WTC11 (cell line): ENCODE measurements at regions of chr9 and their contacts with region 1.

Region 1: DNA sequence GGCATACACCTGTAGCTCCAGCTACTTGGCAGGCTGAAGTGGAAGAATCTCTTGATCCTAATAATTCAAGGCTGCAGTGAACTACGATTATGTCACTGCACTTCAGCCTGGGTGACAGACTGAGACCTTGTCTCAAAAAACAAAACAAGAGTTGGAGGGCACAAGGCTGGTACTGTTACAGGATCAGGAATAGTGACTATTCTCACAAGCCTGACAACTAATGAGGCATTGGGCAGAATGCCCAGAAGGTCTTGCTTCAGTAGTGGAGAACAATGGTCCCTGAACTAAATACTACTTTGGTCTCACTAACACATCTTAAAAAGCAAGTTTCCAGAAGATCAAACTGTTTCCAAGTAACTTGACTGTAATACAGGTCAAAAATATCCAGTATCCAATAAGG is 182.9 kb upstream of the RFX3 start:
- DNase-seq: no peak
- ATAC-seq: no peak
- H3K4me3 Mint-ChIP-seq: no peak overlapping the region
- H3K27ac Mint-ChIP-seq: no peak overlapping the region
- H3K4me1 Mint-ChIP-seq: no peaks in the 10 kb centered on the region
- H3K27me3 Mint-ChIP-seq: no peaks in the 10 kb centered on the region; the same call in 1 of the 2 replicates
- CTCF ChIP-seq: no peak

Region 2: DNA sequence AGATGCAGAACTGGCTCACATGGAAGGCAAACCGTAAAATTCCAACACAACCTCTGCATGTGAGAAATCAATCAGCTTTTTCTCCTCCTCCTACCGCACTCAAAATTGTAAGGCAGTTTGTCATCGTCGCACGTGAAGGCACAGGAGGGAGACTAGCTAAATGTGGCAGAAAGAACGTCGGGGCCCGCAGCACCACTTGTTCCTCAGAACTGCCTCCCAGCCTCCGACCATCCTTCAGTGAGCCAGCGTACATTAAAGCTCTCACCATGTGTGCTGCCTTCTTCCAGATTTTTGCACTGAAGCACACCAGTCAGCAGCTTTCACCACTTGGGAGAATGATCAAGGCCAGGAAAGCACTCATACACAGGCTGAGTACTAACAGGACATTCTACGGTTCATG is 288.9 kb before region 1 on chr9:
- CTCF ChIA-PET with region 1: no interaction called
- POLR2A ChIA-PET with region 1: interaction called, 10 read pairs
- DNase-seq: no peak
- ATAC-seq: no peak
- H3K4me3 Mint-ChIP-seq: no peak overlapping the region
- H3K27ac Mint-ChIP-seq: no peak overlapping the region
- H3K4me1 Mint-ChIP-seq: no peaks in the 10 kb centered on the region
- H3K27me3 Mint-ChIP-seq: no peaks in the 10 kb centered on the region
- CTCF ChIP-seq: no peak

Region 3: GRCh38 chr9:3508521-3509291 is 200.0 kb before region 1 on chr9:
- CTCF ChIA-PET with region 1: no interaction called
- POLR2A ChIA-PET with region 1: no interaction called
- DNase-seq: no peak
- ATAC-seq: no peak
- H3K4me3 Mint-ChIP-seq: no peak overlapping the region
- H3K27ac Mint-ChIP-seq: peak overlapping the region; percentile 25
- H3K4me1 Mint-ChIP-seq: peaks cover 53% of the 10 kb centered on the region
- H3K27me3 Mint-ChIP-seq: no peaks in the 10 kb centered on the region
- CTCF ChIP-seq: no peak

Region 4: DNA sequence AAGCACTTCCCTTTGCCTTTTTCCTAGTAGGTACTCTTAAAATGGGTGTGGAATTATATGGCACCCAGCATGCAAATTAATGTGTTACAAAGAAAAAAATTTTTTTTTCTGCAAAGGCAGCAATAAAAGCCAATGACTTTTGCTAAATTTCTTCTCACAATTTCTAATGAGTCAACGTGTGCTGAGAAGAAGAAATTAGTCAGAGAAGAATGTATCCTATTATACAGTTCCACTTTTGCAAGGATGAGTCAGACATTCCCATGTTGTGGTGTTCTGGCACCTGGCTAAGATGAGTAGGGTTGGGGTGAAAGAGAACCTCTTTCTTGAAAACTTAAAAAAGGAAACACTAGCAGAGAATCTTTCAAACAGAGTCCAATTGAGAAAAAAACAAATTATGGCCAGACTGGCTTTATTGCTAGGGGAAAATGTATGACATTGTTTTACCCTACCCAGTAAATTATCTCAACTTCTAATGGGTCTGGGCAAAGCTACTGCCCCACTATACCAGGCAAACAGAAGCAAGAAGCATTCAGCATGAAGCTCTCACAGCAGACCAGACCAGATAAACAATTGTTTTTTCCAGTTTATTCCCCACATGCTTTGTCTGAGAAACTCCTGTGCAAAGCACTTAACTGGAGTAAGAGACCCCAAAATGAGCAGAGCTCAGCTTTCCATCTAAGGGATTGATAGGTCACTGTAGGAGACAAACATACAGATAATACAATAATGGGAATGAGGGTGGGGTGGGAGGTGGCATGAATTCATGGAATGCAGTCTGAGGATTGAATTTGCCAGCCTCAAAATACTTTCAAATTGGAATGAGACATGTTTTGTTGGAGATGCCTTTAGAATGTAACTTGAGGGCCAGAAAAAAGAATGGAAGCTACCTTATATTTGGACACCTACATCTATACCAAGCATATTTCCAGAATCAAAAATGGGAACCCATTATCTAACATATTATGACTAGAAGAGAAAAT is 37.8 kb after region 1 on chr9:
- CTCF ChIA-PET with region 1: no interaction called
- POLR2A ChIA-PET with region 1: no interaction called
- DNase-seq: no peak
- ATAC-seq: no peak
- H3K4me3 Mint-ChIP-seq: no peak overlapping the region
- H3K27ac Mint-ChIP-seq: no peak overlapping the region
- H3K4me1 Mint-ChIP-seq: peaks cover 32% of the 10 kb centered on the region
- H3K27me3 Mint-ChIP-seq: peaks cover 8% of the 10 kb centered on the region; the same call in 1 of the 2 replicates
- CTCF ChIP-seq: no peak

Region 5: GRCh38 chr9:3793971-3794383 is 85.2 kb after region 1 on chr9:
- CTCF ChIA-PET with region 1: no interaction called
- POLR2A ChIA-PET with region 1: no interaction called
- DNase-seq: no peak
- ATAC-seq: peak; percentile 92
- H3K4me3 Mint-ChIP-seq: no peak overlapping the region
- H3K27ac Mint-ChIP-seq: no peak overlapping the region; the same call in 1 of the 2 replicates
- H3K4me1 Mint-ChIP-seq: peaks cover 26% of the 10 kb centered on the region
- H3K27me3 Mint-ChIP-seq: no peaks in the 10 kb centered on the region; the same call in 1 of the 2 replicates
- CTCF ChIP-seq: no peak

Region 6: GRCh38 chr9:3804103-3804502 is 95.4 kb after region 1 on chr9:
- CTCF ChIA-PET with region 1: no interaction called
- POLR2A ChIA-PET with region 1: no interaction called
- DNase-seq: no peak
- ATAC-seq: no peak
- H3K4me3 Mint-ChIP-seq: no peak overlapping the region
- H3K27ac Mint-ChIP-seq: no peak overlapping the region
- H3K4me1 Mint-ChIP-seq: no peaks in the 10 kb centered on the region
- H3K27me3 Mint-ChIP-seq: no peaks in the 10 kb centered on the region
- CTCF ChIP-seq: no peak